ENCODE measurements at regions of chr3 and their contacts with region 1.

Region 1: DNA sequence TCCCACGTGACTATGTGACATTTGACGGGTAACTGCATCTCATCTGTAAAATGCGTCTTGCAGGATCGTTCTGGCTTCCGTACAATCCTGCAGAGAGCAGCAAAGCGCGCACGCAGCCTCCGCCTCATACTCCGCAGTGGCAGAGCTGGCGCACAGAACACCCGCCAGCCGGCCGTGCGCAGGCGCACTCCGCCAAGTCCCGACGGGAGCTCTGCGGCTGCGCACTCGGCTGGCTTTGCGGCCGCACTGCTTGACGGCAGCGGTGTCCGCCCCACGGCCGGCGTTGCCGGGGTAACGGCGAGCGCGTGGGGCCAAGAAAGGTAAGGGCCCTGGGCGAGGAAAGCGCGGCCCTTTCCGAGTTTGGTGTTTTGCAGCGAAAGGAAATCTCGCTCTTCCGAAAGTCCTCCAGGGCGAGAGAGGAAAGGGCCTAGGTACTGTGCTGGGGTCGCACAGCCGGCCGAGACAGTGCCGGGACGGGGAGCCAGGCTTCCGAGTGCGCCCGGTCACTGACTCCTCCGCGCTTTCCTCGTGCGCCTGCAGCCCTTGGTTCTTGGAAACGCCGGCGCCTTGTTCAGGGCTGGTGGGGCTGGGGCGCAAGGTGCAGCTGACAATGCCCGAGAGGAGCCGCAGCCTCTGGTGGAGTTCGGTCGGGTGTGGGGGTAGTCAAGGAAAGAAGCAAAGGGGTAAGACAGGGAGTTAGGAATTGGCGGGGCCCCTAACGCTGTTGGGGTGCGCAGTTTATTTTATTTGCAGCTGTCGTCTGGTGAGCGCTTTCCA is at the start of gene TSEN2:
- DNase-seq: peak; percentile 95
- H3K4me3 Mint-ChIP-seq: peak within 1 kb of the TSS; percentile 93
- H3K27ac Mint-ChIP-seq: peak within 1 kb of the TSS; percentile 82
- H3K4me1 Mint-ChIP-seq: peaks cover 44% of the 10 kb centered on the region
- H3K27me3 Mint-ChIP-seq: no peaks in the 10 kb centered on the region
- total RNA-seq, gene TSEN2: 14.0 to 14.8 TPM

Region 2: DNA sequence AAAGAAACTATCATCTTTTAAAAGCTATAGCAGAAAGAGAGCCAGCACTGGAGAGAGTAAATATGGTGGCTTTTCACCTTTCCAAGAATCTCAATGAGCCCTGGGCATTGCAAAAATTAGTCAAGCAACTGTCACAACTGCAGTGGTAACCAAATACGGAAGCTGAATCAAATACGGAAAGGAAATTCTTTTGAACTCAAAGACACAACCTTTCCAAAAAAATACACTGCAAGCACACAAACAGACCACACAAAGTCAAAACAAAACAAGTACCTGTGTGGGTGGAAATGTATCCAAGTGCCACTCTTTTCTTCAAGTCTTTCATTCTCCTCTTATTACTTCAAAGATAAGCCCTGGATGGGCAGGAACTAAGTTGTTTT is 858.3 kb before region 1 on chr3:
- CTCF ChIA-PET with region 1: no interaction called
- intact Hi-C with region 1: loop called (anchors 10 kb)
- DNase-seq: peak; percentile 54
- H3K4me3 Mint-ChIP-seq: no peak overlapping the region
- H3K27ac Mint-ChIP-seq: no peak overlapping the region
- H3K4me1 Mint-ChIP-seq: peaks cover 60% of the 10 kb centered on the region
- H3K27me3 Mint-ChIP-seq: no peaks in the 10 kb centered on the region

Region 3: GRCh38 chr3:12135029-12135657 is 349.2 kb before region 1 on chr3:
- CTCF ChIA-PET with region 1: interaction called, 129 read pairs
- intact Hi-C with region 1: loop called (anchors 1 kb)
- DNase-seq: peak; percentile 80
- H3K4me3 Mint-ChIP-seq: no peak overlapping the region
- H3K27ac Mint-ChIP-seq: no peak overlapping the region
- H3K4me1 Mint-ChIP-seq: no peaks in the 10 kb centered on the region
- H3K27me3 Mint-ChIP-seq: peaks cover 11% of the 10 kb centered on the region

Region 4: DNA sequence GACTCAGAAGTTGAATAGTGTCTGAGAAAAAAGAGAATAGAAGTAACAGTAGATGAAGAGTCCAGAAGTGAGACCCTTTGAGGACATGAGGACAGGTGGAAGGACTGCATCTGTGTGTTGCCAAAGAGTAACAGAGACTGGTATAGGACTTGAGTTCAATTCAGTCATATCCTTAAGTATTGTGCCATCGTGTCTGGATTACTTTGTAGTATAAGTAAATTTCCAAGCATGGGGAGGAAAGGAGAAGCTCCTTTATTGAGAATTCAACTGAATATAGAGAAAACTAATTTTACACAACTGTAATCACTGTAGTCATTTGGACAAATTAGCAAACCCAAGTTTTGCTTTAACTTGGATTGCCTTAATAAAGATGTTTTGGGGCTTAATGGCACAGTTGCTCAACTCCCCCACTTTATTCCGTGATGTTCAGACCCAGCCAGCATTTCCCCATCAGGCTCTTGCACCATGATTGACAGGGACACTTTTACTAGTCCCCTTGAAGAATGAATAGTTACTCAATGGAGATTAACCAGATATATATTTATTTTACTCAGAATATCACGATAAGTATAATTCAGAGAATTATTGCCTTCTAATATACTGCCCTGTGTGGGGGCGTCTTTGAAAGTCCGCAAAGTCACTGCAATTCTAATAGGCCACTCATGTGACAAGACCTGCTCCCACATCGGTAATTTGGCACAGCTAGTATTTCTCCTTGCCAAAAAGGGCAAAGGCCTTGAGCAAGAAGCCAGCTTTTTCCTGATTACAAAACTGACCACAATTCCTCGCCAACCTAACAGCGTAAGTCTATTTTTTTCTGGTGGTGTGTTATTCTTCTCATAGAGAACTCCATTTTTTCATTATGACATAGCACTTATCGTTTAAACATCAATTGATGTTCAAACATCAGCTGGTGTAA is 134.2 kb before region 1 on chr3:
- CTCF ChIA-PET with region 1: interaction called, 4 read pairs
- intact Hi-C with region 1: loop called (anchors 5 kb)
- DNase-seq: no peak
- H3K4me3 Mint-ChIP-seq: no peak overlapping the region
- H3K27ac Mint-ChIP-seq: no peak overlapping the region
- H3K4me1 Mint-ChIP-seq: peaks cover 10% of the 10 kb centered on the region
- H3K27me3 Mint-ChIP-seq: peaks cover 5% of the 10 kb centered on the region

Region 5: DNA sequence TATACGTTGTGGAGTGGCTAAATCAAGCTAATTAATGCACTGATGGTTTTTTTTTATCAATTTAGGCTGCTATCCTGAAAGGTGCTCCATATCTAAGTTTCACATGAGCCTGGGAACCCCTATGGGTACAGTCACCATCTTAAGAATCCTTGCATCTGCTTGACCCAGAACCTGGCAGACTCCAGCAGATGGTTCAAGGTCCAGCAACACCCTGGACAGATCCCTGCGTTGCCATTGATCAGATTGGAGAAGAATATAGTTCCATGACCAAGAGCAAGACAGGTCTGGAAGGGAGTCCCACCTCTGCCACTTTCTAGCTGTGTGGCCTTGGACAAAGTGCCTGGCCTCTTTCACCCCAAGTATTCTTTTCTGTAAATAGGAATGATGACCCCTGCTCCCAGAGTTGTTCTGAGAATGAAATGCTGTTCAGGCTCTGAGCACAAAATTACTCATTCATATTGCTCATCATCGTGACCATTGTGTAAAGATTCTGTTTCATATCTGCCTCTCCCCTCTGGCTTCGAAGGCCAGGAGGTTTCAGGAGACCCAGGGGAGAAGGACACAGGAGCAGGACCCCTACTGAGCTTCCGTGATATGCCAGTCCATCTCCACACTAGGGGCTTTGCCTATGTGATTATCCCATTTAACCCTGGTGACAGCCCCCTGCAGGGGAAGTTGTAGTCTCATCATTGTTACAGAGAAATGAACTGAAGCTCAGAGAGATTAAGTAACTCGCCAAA is 30.1 kb before region 1 on chr3:
- CTCF ChIA-PET with region 1: no interaction called
- intact Hi-C with region 1: no loop called
- DNase-seq: no peak
- H3K4me3 Mint-ChIP-seq: no peak overlapping the region
- H3K27ac Mint-ChIP-seq: no peak overlapping the region
- H3K4me1 Mint-ChIP-seq: no peaks in the 10 kb centered on the region
- H3K27me3 Mint-ChIP-seq: no peaks in the 10 kb centered on the region

Region 6: GRCh38 chr3:12541631-12542030 is 57.2 kb after region 1 on chr3:
- CTCF ChIA-PET with region 1: no interaction called
- intact Hi-C with region 1: no loop called
- DNase-seq: no peak
- H3K4me3 Mint-ChIP-seq: no peak overlapping the region
- H3K27ac Mint-ChIP-seq: no peak overlapping the region
- H3K4me1 Mint-ChIP-seq: peaks cover 2% of the 10 kb centered on the region
- H3K27me3 Mint-ChIP-seq: no peaks in the 10 kb centered on the region

Region 7: GRCh38 chr3:12611117-12611516 is 126.7 kb after region 1 on chr3:
- CTCF ChIA-PET with region 1: no interaction called
- intact Hi-C with region 1: loop called (anchors 1 kb)
- DNase-seq: no peak
- H3K4me3 Mint-ChIP-seq: no peak overlapping the region
- H3K27ac Mint-ChIP-seq: no peak overlapping the region
- H3K4me1 Mint-ChIP-seq: peaks cover 45% of the 10 kb centered on the region
- H3K27me3 Mint-ChIP-seq: no peaks in the 10 kb centered on the region

Region 8: DNA sequence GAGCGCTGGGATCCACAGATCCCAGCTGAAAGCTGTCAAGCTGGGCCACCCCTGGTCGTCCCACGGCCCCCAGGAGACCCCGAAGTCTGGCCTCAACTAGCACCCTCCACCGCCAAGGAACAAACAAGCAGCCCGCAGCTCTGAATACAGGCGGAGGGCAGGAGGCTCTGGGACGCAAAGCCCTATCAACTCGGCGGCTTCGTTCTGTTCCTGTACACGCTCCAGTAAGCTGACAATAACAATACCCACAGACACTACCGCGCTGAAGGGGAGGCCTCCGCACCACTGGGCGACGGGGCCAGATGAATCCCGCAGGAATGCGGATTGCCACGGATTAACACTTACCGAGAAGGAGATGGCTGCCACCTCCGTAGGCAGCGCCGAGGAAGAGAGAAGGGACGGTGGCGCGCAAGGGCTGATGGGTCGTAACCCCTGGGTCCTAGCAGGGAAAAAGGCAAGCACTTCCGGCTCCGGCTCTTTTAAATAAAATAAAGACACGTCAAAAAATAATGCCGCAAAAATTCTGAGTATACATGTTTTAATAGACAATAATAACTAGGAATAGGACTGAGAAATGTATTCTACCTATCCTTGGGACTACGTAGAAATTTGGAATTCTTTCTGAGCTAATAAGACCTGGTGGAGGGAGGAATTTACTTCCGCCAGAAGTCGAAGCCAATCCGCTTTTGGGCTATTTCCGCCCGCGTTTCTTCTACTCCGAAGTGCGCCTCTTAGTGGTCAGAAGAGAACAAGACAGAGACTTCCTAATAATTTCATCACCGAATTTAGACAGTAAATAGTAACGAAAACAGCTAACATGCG is 357.0 kb after region 1 on chr3 and contains the start of gene RPL32:
- CTCF ChIA-PET with region 1: interaction called, 3 read pairs
- intact Hi-C with region 1: loop called (anchors 1 kb)
- DNase-seq: peak; percentile 90
- H3K4me3 Mint-ChIP-seq: peak within 1 kb of the TSS; percentile 96
- H3K27ac Mint-ChIP-seq: peak within 1 kb of the TSS; percentile 99
- H3K4me1 Mint-ChIP-seq: peaks cover 48% of the 10 kb centered on the region
- H3K27me3 Mint-ChIP-seq: no peaks in the 10 kb centered on the region
- total RNA-seq, gene RPL32: 3,385 to 3,704 TPM

Measured in activated naive CD4-positive, alpha-beta T cell treated with anti-CD3 and anti-CD28 coated beads for 36 hours (primary cell).